ENCODE measurements at regions of chr20 and their contacts with region 1.

Region 1: GRCh38 chr20:39081255-39081654 is 119.1 kb downstream of the DHX35 start:
- DNase-seq: peak; percentile 89
- ATAC-seq: peak; percentile 86
- H3K4me3 Mint-ChIP-seq: no peak overlapping the region
- H3K27ac Mint-ChIP-seq: no peak overlapping the region
- H3K4me1 Mint-ChIP-seq: no peaks in the 10 kb centered on the region
- H3K27me3 Mint-ChIP-seq: peaks cover 10% of the 10 kb centered on the region
- CTCF ChIP-seq: peak; percentile 89

Region 2: GRCh38 chr20:39070484-39071231 is 10.6 kb before region 1 on chr20:
- CTCF ChIA-PET with region 1: interaction called, 44 read pairs
- POLR2A ChIA-PET with region 1: interaction called, 4 read pairs
- intact Hi-C with region 1: no loop called
- DNase-seq: no peak
- ATAC-seq: peak; percentile 45
- H3K4me3 Mint-ChIP-seq: no peak overlapping the region
- H3K27ac Mint-ChIP-seq: no peak overlapping the region
- H3K4me1 Mint-ChIP-seq: no peaks in the 10 kb centered on the region
- H3K27me3 Mint-ChIP-seq: peaks cover 11% of the 10 kb centered on the region
- CTCF ChIP-seq: no peak

Region 3: DNA sequence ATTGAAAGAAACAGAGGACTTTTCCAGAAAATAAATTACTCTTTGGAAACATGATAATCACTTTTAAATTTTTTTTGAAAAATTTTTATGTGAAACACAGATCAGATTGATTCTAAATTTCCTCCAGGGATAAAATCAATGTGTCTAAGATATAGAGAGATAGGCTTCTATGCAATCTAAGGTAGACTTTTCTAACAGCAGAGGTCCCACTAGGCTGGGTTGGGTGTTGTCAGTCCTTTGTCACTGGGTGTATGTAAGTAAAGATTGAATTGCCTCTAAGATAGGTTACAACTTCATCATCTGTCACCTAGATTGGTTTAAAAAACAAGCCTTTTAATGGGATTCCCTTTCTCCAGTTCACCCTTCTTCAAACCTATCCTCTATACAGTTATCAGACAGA is 330.8 kb after region 1 on chr20:
- CTCF ChIA-PET with region 1: no interaction called
- POLR2A ChIA-PET with region 1: no interaction called
- intact Hi-C with region 1: no loop called
- DNase-seq: no peak
- ATAC-seq: no peak
- H3K4me3 Mint-ChIP-seq: no peak overlapping the region
- H3K27ac Mint-ChIP-seq: no peak overlapping the region
- H3K4me1 Mint-ChIP-seq: no peaks in the 10 kb centered on the region
- H3K27me3 Mint-ChIP-seq: peaks cover 3% of the 10 kb centered on the region
- CTCF ChIP-seq: no peak

Measured in activated CD8-positive, alpha-beta T cell treated with anti-CD3 and anti-CD28 coated beads for 36 hours (primary cell).